CD4-positive, alpha-beta memory T cell (primary cell): ENCODE measurements at regions of chr2 and their contacts with region 1.

Region 1: DNA sequence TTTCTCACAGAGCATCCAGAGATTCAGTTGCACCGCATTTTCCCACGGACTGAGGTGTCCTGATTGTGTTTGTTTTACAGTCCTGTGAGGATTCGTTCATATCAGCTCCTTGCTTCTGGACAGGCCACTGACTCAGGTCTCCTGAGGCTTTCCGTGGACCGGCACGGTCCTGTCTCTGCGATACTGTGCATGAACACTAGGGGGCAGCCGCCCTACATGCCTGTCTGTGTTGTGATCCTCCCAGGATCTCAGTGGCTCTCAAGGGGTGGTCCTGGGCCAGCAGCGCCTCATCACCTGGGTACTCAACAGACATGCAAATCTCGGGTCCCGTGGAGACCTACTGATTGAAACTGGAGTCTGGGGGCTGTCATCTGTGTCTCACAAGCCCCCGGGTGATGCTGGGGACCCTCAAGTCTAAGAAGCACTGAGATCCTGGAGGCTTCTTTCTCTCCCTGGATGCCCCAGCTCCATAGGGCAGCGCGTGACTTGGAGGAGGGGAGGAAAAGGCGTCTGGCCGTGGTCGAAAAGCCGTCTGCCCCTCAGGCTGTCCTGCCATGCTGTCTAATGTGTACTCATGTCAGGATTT is 28.9 kb downstream of the IL1R2 start:
- DNase-seq: peak; percentile 70 to 80 (median 72)
- H3K4me3 ChIP-seq: no peak overlapping the region
- H3K4me3 Mint-ChIP-seq: peak overlapping the region in 2 of 8 donors; percentile 24 to 31
- H3K27ac ChIP-seq: no peak overlapping the region
- H3K27ac Mint-ChIP-seq: no peak overlapping the region
- H3K4me1 ChIP-seq: no peaks in the 10 kb centered on the region
- H3K4me1 Mint-ChIP-seq: peaks cover 0 to 6% (median 3%) of the 10 kb centered on the region in 4 donors
- H3K27me3 ChIP-seq: no peaks in the 10 kb centered on the region
- H3K27me3 Mint-ChIP-seq: no peaks in the 10 kb centered on the region

Region 2: GRCh38 chr2:101993772-101994171 is 26.9 kb before region 1 on chr2:
- CTCF ChIA-PET with region 1: no interaction called
- POLR2A ChIA-PET with region 1: no interaction called
- intact Hi-C with region 1: no loop called
- DNase-seq: no peak
- H3K4me3 ChIP-seq: no peak overlapping the region
- H3K4me3 Mint-ChIP-seq: no peak overlapping the region
- H3K27ac ChIP-seq: no peak overlapping the region
- H3K27ac Mint-ChIP-seq: peak overlapping the region in 1 of 7 donors; percentile 74
- H3K4me1 ChIP-seq: no peaks in the 10 kb centered on the region
- H3K4me1 Mint-ChIP-seq: peaks cover 0 to 3% (median under 1%) of the 10 kb centered on the region in 4 donors
- H3K27me3 ChIP-seq: no peaks in the 10 kb centered on the region
- H3K27me3 Mint-ChIP-seq: peaks cover 7 to 10% of the 10 kb centered on the region in 2 donors

Region 3: GRCh38 chr2:102033031-102033749 is 12.5 kb after region 1 on chr2:
- CTCF ChIA-PET with region 1: interaction called, 11 read pairs
- POLR2A ChIA-PET with region 1: interaction called, 3 read pairs
- intact Hi-C with region 1: no loop called
- DNase-seq: peak in 2 of 5 donors; percentile 6 to 7
- H3K4me3 ChIP-seq: no peak overlapping the region
- H3K4me3 Mint-ChIP-seq: peak overlapping the region in 7 of 8 donors; percentile 13 to 84 (median 56)
- H3K27ac ChIP-seq: no peak overlapping the region
- H3K27ac Mint-ChIP-seq: peak overlapping the region; percentile 42 to 86 (median 71)
- H3K4me1 ChIP-seq: peaks cover 25% of the 10 kb centered on the region
- H3K4me1 Mint-ChIP-seq: peaks cover 20 to 33% (median 26%) of the 10 kb centered on the region in 4 donors
- H3K27me3 ChIP-seq: no peaks in the 10 kb centered on the region
- H3K27me3 Mint-ChIP-seq: no peaks in the 10 kb centered on the region

Region 4: DNA sequence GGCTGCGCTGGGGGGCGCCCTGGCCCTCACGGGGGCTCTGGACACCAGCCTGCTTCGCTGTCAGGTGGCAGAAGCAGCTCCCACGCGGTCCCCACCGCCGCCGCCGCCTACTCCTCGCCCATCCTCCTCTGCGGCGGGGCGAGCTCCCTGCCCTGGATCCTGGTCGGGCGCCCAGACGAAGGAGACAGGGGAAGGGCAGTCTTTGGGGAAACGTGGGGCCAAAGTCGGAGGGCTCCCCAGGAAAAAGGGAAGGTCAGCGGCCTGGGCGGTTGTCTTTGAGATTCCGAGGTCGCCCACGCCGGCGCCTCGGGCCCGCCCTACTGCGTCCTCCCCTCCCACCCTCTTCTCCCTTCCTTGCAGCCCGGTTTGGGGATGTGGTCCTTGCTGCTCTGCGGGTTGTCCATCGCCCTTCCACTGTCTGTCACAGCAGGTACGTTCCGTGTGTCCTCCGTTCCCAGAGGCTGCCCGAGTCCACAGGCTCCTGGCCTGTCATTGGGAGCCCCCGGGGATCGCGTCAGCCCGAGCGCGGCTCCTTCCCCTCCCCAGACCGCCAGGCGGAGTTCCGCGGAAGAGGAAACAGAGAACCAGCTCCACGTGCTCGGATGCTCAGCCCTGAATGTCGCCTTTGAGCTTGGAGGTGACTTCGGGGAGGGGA is 166.9 kb after region 1 on chr2:
- CTCF ChIA-PET with region 1: interaction called, 7 read pairs
- POLR2A ChIA-PET with region 1: no interaction called
- intact Hi-C with region 1: loop called (anchors 5 kb)
- DNase-seq: peak; percentile 19 to 52 (median 39)
- H3K4me3 ChIP-seq: peak overlapping the region in 1 of 2 donors; percentile 36
- H3K4me3 Mint-ChIP-seq: peak overlapping the region; percentile 86 to 95 (median 88)
- H3K27ac ChIP-seq: no peak overlapping the region
- H3K27ac Mint-ChIP-seq: peak overlapping the region in 5 of 7 donors; percentile 81 to 93 (median 85)
- H3K4me1 ChIP-seq: peaks cover 9% of the 10 kb centered on the region
- H3K4me1 Mint-ChIP-seq: peaks cover 8 to 19% (median 13%) of the 10 kb centered on the region in 4 donors
- H3K27me3 ChIP-seq: no peaks in the 10 kb centered on the region
- H3K27me3 Mint-ChIP-seq: peaks cover 5 to 8% of the 10 kb centered on the region in 2 donors

Region 5: DNA sequence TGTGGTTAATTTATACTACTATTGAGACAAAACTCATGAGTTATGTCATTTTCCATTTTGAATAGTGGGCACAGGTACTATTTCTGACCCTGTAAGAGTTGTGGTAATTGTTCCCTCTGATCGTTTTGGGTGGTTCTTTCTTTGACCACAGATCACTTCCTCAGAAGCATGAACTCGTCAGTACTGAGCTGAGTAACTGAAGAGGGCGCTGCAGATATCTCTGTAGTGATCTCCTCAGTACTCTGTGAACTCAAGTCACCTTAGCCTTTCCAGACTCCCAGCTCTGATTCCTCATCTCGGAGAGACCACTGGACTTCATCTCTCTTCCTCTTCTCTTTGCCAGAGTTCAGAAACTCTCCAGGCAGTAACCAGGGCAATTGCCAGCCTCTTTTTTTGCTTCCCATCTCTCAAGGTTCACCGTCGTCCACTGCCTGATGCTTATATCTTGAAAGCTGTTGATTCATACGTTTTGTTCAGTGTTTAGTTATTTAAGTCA is 281.2 kb after region 1 on chr2:
- CTCF ChIA-PET with region 1: interaction called, 4 read pairs
- POLR2A ChIA-PET with region 1: no interaction called
- intact Hi-C with region 1: loop called (anchors 1 kb)
- DNase-seq: peak; percentile 33 to 60 (median 40)
- H3K4me3 ChIP-seq: no peak overlapping the region
- H3K4me3 Mint-ChIP-seq: peak overlapping the region in 6 of 8 donors; percentile 11 to 77 (median 50)
- H3K27ac ChIP-seq: no peak overlapping the region
- H3K27ac Mint-ChIP-seq: peak overlapping the region in 2 of 7 donors; percentile 43 to 54
- H3K4me1 ChIP-seq: peaks cover 12% of the 10 kb centered on the region
- H3K4me1 Mint-ChIP-seq: peaks cover 13 to 18% (median 15%) of the 10 kb centered on the region in 4 donors
- H3K27me3 ChIP-seq: no peaks in the 10 kb centered on the region
- H3K27me3 Mint-ChIP-seq: peaks cover 3 to 5% of the 10 kb centered on the region in 2 donors